ENCODE measurements at regions of chr9 and their contacts with region 1.

Region 1: GRCh38 chr9:127916665-127917613 is at the start of gene ST6GALNAC4:
- DNase-seq: peak; percentile 89 to 99 (median 96)
- ATAC-seq: peak; percentile 94
- H3K4me3 ChIP-seq: peak within 1 kb of the TSS; percentile 91
- H3K4me3 Mint-ChIP-seq: peak within 1 kb of the TSS; percentile 88
- H3K27ac ChIP-seq: peak within 1 kb of the TSS in 1 of 2 donors; percentile 56
- H3K27ac Mint-ChIP-seq: peak within 1 kb of the TSS; percentile 89
- H3K4me1 ChIP-seq: peaks cover 65% of the 10 kb centered on the region
- H3K4me1 Mint-ChIP-seq: peaks cover 51% of the 10 kb centered on the region
- H3K27me3 ChIP-seq: no peaks in the 10 kb centered on the region
- H3K27me3 Mint-ChIP-seq: no peaks in the 10 kb centered on the region
- CTCF ChIP-seq: no peak
- total RNA-seq, gene ST6GALNAC4: 28.7 to 30.2 TPM

Region 2: DNA sequence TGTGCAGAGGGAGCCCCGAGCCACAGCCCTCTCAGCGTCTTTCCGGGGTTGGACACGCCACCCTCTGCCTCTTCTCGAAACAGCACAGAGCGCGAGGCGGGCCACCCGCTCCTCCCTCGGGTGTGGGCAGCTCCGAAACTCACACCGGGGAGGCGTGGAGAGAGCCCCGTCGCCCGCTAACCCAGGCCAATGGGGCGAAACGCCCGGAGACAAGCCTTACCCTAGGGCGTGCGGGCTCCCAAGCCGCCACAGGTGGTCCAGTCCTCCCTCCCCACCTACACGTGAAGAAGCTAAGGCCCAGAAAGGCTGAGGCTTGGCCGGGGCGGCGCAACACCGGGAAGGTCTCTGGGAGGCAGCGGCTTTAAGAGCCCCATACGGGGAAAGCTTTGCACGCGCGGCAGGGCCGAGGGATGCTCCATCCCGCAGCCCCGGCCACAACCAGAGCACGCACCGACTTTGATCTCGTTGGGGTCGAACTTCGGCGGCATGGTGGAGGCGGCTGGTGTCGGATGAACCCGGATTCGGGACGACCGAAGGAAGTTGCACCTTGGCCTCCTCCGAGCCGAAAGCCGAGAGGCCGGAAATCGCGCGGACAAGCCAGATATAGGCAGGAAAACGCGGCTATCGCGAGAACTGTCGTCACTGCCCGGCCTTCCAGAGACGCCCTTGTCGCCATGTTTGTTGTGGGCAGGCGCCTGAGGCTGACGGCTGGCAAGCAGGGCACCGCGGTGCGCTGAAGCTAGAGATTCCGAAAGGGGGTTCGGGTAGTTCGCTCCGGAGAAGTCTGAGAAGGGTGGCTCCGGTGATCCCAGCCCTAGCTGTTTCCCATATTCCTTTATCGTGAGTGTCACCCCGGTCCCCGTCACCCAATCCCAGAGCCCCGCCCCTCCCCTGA is 465.9 kb before region 1 on chr9 and contains the starts of genes LRSAM1 and RPL12:
- CTCF ChIA-PET with region 1: no interaction called
- POLR2A ChIA-PET with region 1: interaction called, 4 read pairs
- intact Hi-C with region 1: loop called in 1 of 2 experiments (anchors 5 kb)
- DNase-seq: peak; percentile 97 to 100 (median 99)
- ATAC-seq: peak; percentile 84
- H3K4me3 ChIP-seq: peak within 1 kb of the TSS; percentile 89
- H3K4me3 Mint-ChIP-seq: peak within 1 kb of the TSS; percentile 99
- H3K27ac ChIP-seq: peak within 1 kb of the TSS; percentile 74 to 92
- H3K27ac Mint-ChIP-seq: peak within 1 kb of the TSS; percentile 99
- H3K4me1 ChIP-seq: peaks cover 41% of the 10 kb centered on the region
- H3K4me1 Mint-ChIP-seq: peaks cover 40% of the 10 kb centered on the region
- H3K27me3 ChIP-seq: no peaks in the 10 kb centered on the region
- H3K27me3 Mint-ChIP-seq: no peaks in the 10 kb centered on the region
- CTCF ChIP-seq: no peak
- total RNA-seq, gene LRSAM1: 11.4 to 16.0 TPM
- total RNA-seq, gene RPL12: 1,884 to 1,993 TPM

Region 3: GRCh38 chr9:127586537-127586936 is 330.4 kb before region 1 on chr9:
- CTCF ChIA-PET with region 1: interaction called, 4 read pairs
- POLR2A ChIA-PET with region 1: no interaction called
- intact Hi-C with region 1: loop called (anchors 1 kb)
- DNase-seq: peak; percentile 33 to 82 (median 52)
- ATAC-seq: peak; percentile 43
- H3K4me3 ChIP-seq: no peak overlapping the region
- H3K4me3 Mint-ChIP-seq: no peak overlapping the region
- H3K27ac ChIP-seq: no peak overlapping the region
- H3K27ac Mint-ChIP-seq: no peak overlapping the region
- H3K4me1 ChIP-seq: peaks cover 4% of the 10 kb centered on the region
- H3K4me1 Mint-ChIP-seq: no peaks in the 10 kb centered on the region
- H3K27me3 ChIP-seq: no peaks in the 10 kb centered on the region
- H3K27me3 Mint-ChIP-seq: peaks cover 20% of the 10 kb centered on the region
- CTCF ChIP-seq: peak; percentile 65

Region 4: DNA sequence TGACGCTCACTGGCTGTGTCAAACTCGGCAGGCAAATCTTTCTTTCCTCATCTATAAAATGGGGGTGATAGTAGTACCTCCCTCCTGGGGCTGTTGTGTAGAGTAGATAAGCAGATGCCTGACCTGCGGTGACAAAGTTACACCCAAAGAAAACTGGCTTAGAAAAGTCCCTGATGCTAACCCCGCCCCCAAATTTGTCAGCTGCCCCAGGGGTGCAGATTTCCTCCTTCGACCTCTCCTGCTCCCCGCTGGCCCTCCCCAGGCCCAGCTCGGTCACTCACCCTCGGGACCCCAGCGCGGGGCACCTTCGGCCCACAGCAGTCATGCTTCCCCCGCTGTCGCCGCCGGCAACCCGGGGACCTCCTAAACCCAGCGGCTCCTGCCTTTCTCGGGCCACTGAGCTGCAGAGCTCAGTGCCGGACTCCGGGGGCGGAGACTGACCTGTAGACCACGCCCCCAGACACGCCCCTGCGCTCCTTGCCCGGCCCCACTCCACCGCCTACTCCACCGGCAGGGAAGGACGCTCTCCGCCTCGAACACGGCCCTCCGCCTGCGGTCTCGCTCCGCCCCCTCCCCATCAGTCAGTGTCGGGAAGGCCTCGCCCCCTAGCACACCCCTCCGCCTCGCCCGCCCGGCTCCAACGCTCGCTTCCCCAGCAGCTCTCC is 145.9 kb before region 1 on chr9:
- CTCF ChIA-PET with region 1: interaction called, 3 read pairs
- POLR2A ChIA-PET with region 1: interaction called, 11 read pairs
- intact Hi-C with region 1: no loop called
- DNase-seq: peak; percentile 87 to 98 (median 97)
- ATAC-seq: peak; percentile 80
- H3K4me3 ChIP-seq: peak overlapping the region; percentile 69
- H3K4me3 Mint-ChIP-seq: peak overlapping the region; percentile 90
- H3K27ac ChIP-seq: peak overlapping the region; percentile 90 to 91
- H3K27ac Mint-ChIP-seq: peak overlapping the region; percentile 97
- H3K4me1 ChIP-seq: peaks cover 86% of the 10 kb centered on the region
- H3K4me1 Mint-ChIP-seq: peaks cover 69% of the 10 kb centered on the region
- H3K27me3 ChIP-seq: no peaks in the 10 kb centered on the region
- H3K27me3 Mint-ChIP-seq: no peaks in the 10 kb centered on the region
- CTCF ChIP-seq: no peak

Region 5: DNA sequence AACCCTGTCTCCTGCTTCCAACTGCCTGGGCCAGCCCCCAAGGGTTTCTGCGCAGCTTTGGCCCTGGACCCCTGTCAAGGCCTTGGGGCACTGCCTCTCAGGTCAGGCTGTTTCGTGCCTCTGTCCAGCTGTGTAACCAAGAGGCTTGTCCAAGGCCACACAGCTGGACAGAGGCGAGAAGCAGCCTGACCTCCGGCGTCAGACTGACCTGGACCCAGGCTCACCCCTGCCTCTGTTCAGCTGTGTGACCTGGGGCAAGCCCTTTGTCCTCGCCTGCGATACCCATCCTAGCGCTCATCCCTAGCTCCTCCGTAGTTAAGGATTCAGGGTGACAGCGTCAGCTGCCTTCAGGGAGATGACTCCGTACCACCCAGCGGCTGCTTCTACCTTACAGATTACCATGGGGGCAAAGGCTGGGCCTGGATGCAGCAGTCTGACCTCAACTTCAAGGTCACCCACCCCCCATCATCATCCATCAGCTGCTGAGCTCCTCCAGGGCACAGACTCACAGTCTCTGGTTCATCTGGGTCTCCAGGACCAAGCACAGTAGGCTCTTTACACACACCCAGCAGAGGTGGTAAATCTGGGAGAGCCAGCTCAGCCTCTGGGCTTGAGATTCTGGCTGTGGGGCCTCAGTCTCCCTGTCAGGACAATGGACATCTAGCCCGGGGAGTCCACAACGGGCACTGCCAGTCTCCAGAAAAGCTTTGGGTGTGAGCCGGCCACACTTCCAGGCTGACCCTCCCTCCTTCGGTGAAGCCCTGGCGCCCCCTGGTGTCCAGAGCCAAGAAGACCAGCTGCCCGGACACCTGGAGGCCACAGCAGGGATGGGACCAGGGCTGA is 47.4 kb before region 1 on chr9:
- CTCF ChIA-PET with region 1: interaction called, 7 read pairs
- POLR2A ChIA-PET with region 1: interaction called, 3 read pairs
- intact Hi-C with region 1: loop called in 1 of 2 experiments (anchors 2 kb)
- DNase-seq: peak; percentile 52 to 88 (median 71)
- ATAC-seq: peak; percentile 62
- H3K4me3 ChIP-seq: no peak overlapping the region
- H3K4me3 Mint-ChIP-seq: no peak overlapping the region
- H3K27ac ChIP-seq: no peak overlapping the region
- H3K27ac Mint-ChIP-seq: no peak overlapping the region
- H3K4me1 ChIP-seq: peaks cover 23% of the 10 kb centered on the region
- H3K4me1 Mint-ChIP-seq: peaks cover 19% of the 10 kb centered on the region
- H3K27me3 ChIP-seq: no peaks in the 10 kb centered on the region
- H3K27me3 Mint-ChIP-seq: no peaks in the 10 kb centered on the region
- CTCF ChIP-seq: peak; percentile 99

Region 6: DNA sequence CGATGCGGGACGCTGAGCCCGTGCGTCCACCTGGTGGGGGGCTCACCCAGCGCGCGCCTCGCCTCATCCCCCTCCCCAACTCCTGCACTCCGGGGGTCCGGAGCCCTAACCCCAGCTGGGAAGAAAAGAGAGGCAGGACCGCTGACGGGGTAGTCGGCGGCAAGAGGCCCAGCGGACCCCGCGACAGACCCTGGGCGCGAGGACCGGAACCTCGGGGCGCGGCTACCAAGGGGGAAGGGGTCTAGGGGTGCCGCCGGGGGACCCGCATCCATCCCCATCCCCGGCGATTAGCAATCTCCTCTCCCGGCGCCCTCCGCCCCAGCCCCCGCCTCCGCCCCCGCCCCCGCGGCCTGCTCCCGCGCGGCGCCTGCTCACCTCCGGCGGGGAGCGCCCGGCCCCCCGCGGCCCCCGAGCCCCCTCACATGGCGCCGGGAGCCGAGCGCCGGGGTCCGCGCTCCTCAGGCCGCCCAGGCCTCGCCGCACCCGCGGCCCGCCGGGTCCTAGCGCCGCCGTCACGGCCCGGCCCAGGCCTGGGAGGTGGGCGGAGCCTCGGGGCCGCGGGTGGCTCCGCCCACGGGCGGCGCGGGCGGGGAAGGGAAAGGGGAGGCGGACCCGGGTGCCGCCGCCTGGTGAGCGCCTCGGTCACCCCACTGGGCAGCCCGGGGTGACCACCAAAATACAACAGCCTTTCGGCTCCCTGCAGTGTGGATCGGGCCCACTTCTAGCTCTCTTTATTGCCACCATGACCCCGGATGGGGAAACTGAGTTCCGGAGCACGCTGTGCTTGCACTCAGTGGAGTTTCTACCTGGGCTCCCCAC is 17.6 kb before region 1 on chr9 and contains the start of gene ST6GALNAC6:
- CTCF ChIA-PET with region 1: interaction called, 3 read pairs
- POLR2A ChIA-PET with region 1: interaction called, 77 read pairs
- intact Hi-C with region 1: loop called in 1 of 2 experiments (anchors 1 kb)
- DNase-seq: peak in 13 of 14 experiments; percentile 32 to 86 (median 61)
- ATAC-seq: peak; percentile 76
- H3K4me3 ChIP-seq: peak within 1 kb of the TSS; percentile 89
- H3K4me3 Mint-ChIP-seq: peak within 1 kb of the TSS; percentile 95
- H3K27ac ChIP-seq: peak within 1 kb of the TSS; percentile 36 to 56
- H3K27ac Mint-ChIP-seq: peak within 1 kb of the TSS; percentile 86
- H3K4me1 ChIP-seq: peaks cover 64% of the 10 kb centered on the region
- H3K4me1 Mint-ChIP-seq: peaks cover 45% of the 10 kb centered on the region
- H3K27me3 ChIP-seq: no peaks in the 10 kb centered on the region
- H3K27me3 Mint-ChIP-seq: no peaks in the 10 kb centered on the region
- CTCF ChIP-seq: no peak
- total RNA-seq, gene ST6GALNAC6: 93.1 to 97.5 TPM

Region 7: DNA sequence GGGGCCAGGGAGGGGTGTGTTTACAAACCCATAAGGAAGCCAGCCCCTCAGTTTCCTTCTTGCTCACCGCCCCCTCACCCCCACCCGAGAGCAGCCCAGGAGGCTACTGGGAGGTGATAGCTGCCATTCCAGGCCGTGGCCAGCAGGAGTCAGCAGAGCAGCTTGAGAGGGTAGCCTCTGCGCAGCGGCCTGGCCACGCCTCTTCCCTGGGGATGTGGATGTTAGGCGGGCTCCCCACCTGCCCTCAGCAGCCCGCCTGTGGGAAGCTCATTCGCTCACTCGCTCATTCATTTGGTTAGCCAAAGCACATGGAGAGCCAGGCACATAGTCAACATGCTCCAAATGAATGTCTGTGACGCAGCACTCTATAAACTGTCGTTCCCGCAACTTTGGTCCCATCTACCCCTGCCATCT is 26.8 kb after region 1 on chr9:
- CTCF ChIA-PET with region 1: no interaction called
- POLR2A ChIA-PET with region 1: no interaction called
- intact Hi-C with region 1: no loop called
- DNase-seq: peak; percentile 59 to 89 (median 72)
- ATAC-seq: peak; percentile 74
- H3K4me3 ChIP-seq: no peak overlapping the region
- H3K4me3 Mint-ChIP-seq: peak overlapping the region; percentile 12
- H3K27ac ChIP-seq: peak overlapping the region in 1 of 2 donors; percentile 14
- H3K27ac Mint-ChIP-seq: peak overlapping the region; percentile 88
- H3K4me1 ChIP-seq: peaks cover 58% of the 10 kb centered on the region
- H3K4me1 Mint-ChIP-seq: peaks cover 58% of the 10 kb centered on the region
- H3K27me3 ChIP-seq: no peaks in the 10 kb centered on the region
- H3K27me3 Mint-ChIP-seq: no peaks in the 10 kb centered on the region
- CTCF ChIP-seq: peak; percentile 77

Measured in CD4-positive, alpha-beta T cell (primary cell).